ENCODE measurements at regions of chr10 and their contacts with region 1.

Region 1: GRCh38 chr10:48656241-48656913 is 28.3 kb upstream of the WDFY4 start:
- DNase-seq: peak; percentile 78 to 96
- H3K4me3 ChIP-seq: peak overlapping the region in 3 of 4 experiments; percentile 18 to 54 (median 32); a peak in 6 of 8 replicates
- H3K27ac ChIP-seq: no peak overlapping the region
- H3K4me1 ChIP-seq: peaks cover 0 to 12% (median 5%) of the 10 kb centered on the region in 4 experiments; a peak in 5 of 7 replicates
- H3K27me3 ChIP-seq: peaks cover 0 to 20% (median 9%) of the 10 kb centered on the region in 4 experiments; a peak in 5 of 7 replicates
- CTCF ChIP-seq: peak; percentile 96 to 99 (median 99)
- EP300 ChIP-seq: no peak
- POLR2A ChIP-seq: no peak
- RAD21 ChIP-seq: peak; percentile 83 to 90

Region 2: DNA sequence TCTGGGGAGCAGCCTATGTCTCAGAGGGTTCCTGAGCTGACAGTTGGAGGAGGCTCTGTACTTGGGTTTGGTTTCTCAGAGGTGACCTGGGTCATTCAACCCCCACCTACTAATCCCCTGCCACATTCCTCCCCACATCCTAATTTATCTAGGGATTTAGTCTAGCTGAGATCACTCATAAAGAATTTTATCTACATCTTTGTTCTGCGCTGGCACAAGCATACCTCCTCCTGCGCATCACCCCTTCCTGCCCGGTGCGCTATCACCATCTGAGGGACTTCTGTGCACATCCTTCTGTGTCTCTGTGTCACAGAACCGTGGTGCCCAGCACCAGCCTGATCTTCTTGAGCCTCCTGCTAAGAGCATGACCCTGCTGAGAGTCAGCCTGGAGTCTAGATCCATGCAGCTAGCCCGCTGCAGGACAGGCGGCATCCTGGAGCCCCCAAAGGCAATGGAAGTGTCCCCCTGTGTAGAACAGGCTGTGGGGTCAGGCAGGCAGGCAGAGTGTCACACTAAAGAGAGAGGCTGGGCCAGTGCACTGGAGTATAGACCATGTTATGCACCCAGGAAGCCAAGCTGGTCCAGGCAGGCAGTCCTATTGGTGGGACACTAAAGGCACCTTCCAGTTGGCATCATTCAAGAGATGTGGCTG is 115.1 kb before region 1 on chr10:
- CTCF ChIA-PET with region 1: interaction called, 61 read pairs
- POLR2A ChIA-PET with region 1: interaction called, 3 read pairs
- DNase-seq: peak in 1 of 2 experiments; percentile 30
- H3K4me3 ChIP-seq: no peak overlapping the region
- H3K27ac ChIP-seq: no peak overlapping the region
- H3K4me1 ChIP-seq: peaks cover 0 to 28% (median 17%) of the 10 kb centered on the region in 4 experiments; a peak in 6 of 7 replicates
- H3K27me3 ChIP-seq: no peaks in the 10 kb centered on the region
- CTCF ChIP-seq: no peak
- EP300 ChIP-seq: no peak
- POLR2A ChIP-seq: no peak
- RAD21 ChIP-seq: no peak

Region 3: DNA sequence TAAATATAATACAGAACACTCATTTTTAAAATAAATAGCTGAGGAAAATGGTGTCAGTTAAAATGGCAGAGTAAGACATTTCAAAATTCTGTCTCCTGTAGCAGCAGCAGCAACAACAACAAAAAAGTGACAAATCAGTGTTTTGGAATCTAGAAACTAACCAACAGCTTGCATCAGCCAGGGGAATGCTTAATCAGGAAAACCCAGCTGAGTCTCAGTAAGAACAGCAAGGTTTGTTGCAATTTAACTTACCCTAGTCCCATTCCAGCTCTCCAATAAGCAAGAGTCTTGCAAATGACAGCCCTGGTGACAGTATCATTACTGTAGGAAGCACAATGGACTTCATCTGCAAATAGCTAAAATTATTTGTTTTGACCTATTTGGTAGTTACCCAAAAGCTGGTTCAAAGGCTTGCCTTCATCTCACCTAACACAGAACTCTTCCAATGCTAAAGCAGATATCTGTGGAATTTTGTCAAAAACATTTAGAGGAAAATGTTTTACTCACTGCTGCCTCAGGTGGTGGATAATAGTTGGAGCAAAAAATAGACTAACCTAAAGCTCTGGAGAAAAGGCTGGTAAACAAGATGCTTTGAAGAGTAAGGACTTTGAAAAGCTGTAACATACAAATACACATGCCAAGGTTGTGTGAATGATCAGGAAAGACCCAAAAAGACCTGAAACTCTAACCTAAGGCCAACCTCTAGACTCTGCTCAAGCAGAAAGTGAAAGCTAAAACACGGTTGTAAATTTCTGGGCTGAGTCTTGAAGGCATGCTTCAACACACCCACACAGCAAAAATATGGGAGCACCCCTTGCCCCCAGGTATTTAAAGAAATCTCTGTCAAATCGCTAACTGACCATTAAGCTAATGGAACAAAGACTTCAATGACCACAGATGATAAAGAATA is 41.6 kb before region 1 on chr10:
- CTCF ChIA-PET with region 1: interaction called, 84 read pairs
- POLR2A ChIA-PET with region 1: no interaction called
- DNase-seq: peak in 1 of 2 experiments; percentile 33
- H3K4me3 ChIP-seq: no peak overlapping the region
- H3K27ac ChIP-seq: no peak overlapping the region
- H3K4me1 ChIP-seq: no peaks in the 10 kb centered on the region
- H3K27me3 ChIP-seq: no peaks in the 10 kb centered on the region; a peak in 1 of 7 replicates
- CTCF ChIP-seq: peak in 1 of 3 experiments; percentile 29; a peak in 1 of 4 replicates
- EP300 ChIP-seq: no peak
- POLR2A ChIP-seq: no peak
- RAD21 ChIP-seq: peak in 1 of 2 experiments; percentile 9; a peak in 1 of 4 replicates

Region 4: GRCh38 chr10:48716416-48716815 is 60.0 kb after region 1 on chr10:
- CTCF ChIA-PET with region 1: interaction called, 12 read pairs
- POLR2A ChIA-PET with region 1: no interaction called
- DNase-seq: no peak
- H3K4me3 ChIP-seq: no peak overlapping the region
- H3K27ac ChIP-seq: no peak overlapping the region
- H3K4me1 ChIP-seq: no peaks in the 10 kb centered on the region; a peak in 1 of 7 replicates
- H3K27me3 ChIP-seq: no peaks in the 10 kb centered on the region
- CTCF ChIP-seq: peak in 1 of 3 experiments; percentile 2; a peak in 1 of 4 replicates
- EP300 ChIP-seq: no peak
- POLR2A ChIP-seq: no peak
- RAD21 ChIP-seq: peak in 1 of 2 experiments; percentile 7; a peak in 1 of 4 replicates

Region 5: GRCh38 chr10:48833674-48834073 is 177.3 kb after region 1 on chr10:
- CTCF ChIA-PET with region 1: no interaction called
- POLR2A ChIA-PET with region 1: no interaction called
- DNase-seq: no peak
- H3K4me3 ChIP-seq: no peak overlapping the region
- H3K27ac ChIP-seq: no peak overlapping the region
- H3K4me1 ChIP-seq: no peaks in the 10 kb centered on the region; a peak in 1 of 7 replicates
- H3K27me3 ChIP-seq: no peaks in the 10 kb centered on the region
- CTCF ChIP-seq: no peak
- EP300 ChIP-seq: no peak
- POLR2A ChIP-seq: no peak
- RAD21 ChIP-seq: no peak

Region 6: GRCh38 chr10:48885383-48885782 is 229.0 kb after region 1 on chr10:
- CTCF ChIA-PET with region 1: interaction called, 14 read pairs
- POLR2A ChIA-PET with region 1: no interaction called
- DNase-seq: peak in 1 of 2 experiments; percentile 35
- H3K4me3 ChIP-seq: no peak overlapping the region
- H3K27ac ChIP-seq: no peak overlapping the region
- H3K4me1 ChIP-seq: no peaks in the 10 kb centered on the region
- H3K27me3 ChIP-seq: no peaks in the 10 kb centered on the region
- CTCF ChIP-seq: peak; percentile 38 to 67 (median 64); a peak in 3 of 4 replicates
- EP300 ChIP-seq: no peak
- POLR2A ChIP-seq: no peak
- RAD21 ChIP-seq: peak; percentile 67 to 74

Region 7: DNA sequence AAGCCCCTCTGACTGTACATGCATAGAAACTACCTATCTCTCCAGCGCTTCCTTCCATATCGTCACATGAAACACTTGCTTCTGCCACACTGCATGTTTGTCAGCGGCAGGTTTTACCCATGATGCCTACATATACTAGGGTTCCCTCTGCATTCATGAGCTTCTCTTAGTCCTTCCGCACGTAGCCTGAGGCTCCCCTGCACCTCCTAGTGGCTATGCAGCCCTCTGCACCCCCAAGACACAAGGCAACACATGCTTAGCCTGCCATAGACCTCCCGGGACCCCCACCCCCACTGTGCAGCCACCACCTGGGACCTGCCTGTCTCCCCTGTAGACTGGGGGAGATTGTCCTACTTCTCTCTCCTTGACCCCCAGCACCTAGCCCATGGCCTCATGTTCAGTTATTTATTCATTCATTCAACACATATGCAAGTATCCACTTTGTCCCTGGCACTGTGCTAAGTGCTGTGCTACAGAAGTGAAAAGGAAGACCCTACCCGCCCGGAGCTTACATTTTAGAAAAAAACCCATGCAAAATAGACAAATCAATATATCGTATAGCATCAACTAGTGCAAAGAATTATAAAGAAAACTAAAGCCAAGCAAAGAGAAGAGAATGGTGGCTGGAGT is 508.3 kb after region 1 on chr10:
- CTCF ChIA-PET with region 1: interaction called, 12 read pairs
- POLR2A ChIA-PET with region 1: no interaction called
- DNase-seq: peak in 1 of 2 experiments; percentile 78
- H3K4me3 ChIP-seq: no peak overlapping the region
- H3K27ac ChIP-seq: no peak overlapping the region
- H3K4me1 ChIP-seq: peaks cover 0 to 2% (median 0%) of the 10 kb centered on the region in 4 experiments; a peak in 2 of 7 replicates
- H3K27me3 ChIP-seq: no peaks in the 10 kb centered on the region
- CTCF ChIP-seq: peak; percentile 74 to 97 (median 92)
- EP300 ChIP-seq: no peak
- POLR2A ChIP-seq: no peak
- RAD21 ChIP-seq: peak; percentile 80 to 87

Measured in H1 (cell line).